Posterior cingulate gyrus (tissue), 11 donors: ENCODE measurements at regions of chr9 and their contacts with region 1.

Region 1: DNA sequence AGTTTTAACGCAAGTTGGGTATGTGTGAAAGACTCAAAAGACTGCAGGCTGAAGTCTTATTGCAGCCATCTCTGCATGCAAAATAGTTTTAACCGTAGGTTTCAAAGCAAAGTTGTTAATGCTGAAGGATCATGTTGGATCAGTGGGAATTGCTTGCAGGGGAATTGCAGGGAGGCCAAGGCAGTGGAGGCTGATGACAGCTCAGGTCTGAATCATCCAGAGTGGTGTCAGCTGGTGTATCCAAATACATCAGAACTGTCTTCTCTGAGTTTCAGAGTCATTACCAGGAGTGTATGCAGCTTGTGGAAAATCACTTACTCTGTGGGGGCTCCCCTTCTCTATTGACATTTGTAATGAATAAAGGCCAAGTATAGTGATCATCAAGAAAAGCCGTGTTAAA is 435.7 kb downstream of the SH3GL2 start:
- DNase-seq: peak in 2 of 10 donors; percentile 17 to 81

Region 2: GRCh38 chr9:17776735-17777134 is 237.8 kb before region 1 on chr9:
- intact Hi-C with region 1: no loop called
- DNase-seq: peak in 3 of 10 donors; percentile 68 to 79 (median 76)

Region 3: DNA sequence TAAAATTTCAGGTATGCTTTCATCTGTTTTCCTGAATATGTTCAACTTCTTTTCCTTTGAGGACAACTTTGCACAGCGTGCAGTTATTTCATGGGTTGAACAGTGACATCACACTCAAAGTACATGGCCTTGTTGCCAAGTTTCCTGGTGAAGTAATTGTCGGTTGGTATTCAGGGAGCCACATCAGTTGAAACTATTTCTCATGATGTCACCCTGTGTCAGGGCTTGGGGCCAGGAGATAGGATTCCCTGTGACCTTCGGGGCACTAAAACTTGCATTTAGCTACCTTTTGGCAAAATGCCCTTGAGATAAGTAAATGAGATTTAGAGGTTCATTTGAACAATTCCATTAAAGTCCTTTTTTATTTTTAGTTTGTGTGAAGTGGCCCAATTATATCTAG is 51.8 kb before region 1 on chr9:
- intact Hi-C with region 1: loop called (anchors 5 kb)
- DNase-seq: no peak

Region 4: DNA sequence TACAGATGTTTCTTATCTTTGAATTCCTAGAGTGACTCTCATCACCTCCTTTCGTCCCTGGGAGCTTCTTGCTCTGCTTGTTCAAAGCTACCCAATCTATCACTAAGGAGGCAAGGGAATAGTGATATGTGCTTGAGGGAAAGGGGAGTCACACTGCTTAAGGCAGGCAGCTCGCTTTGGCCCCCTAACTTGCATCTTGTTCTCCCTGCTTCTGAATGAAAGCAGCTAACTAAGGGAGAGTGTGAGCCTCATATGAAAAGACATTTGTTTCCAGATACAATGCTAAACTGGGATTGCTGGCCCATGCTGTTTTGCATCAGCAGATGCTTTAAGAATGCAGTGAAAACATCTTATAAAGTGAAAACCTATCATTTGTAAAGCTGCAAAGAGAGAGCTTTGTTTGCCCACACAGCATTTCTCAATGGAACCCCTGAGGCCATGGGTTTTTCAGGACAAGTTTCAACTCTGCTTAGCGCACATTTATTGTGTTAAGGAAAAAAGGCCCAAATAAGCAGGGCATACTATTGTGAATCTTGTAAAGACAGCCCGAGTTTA is 91.5 kb after region 1 on chr9:
- intact Hi-C with region 1: no loop called
- DNase-seq: no peak